ENCODE measurements at regions of chr4 and their contacts with region 1.

Region 1: DNA sequence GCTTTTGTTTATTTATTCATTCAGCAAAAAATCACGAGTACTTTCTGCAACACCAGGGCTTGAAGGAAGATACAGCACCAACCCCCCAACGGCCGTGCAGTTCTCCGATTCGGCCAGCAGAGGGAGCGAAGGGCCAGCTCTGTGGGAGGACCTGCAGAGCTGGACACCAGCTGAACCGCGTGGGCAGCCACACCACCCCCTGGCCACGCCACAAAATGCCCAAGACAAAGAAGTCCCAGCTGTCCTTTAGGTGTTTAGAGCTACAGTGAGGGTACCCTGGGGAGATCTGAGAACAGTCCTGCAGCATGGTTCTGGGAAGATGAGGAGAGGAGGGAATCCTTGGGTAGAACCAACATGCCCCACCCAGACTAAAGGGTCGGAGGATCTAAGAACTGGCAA is 83.1 kb downstream of the RELL1 start:
- DNase-seq: peak; percentile 76
- H3K4me3 Mint-ChIP-seq: no peak overlapping the region
- H3K27ac Mint-ChIP-seq: no peak overlapping the region
- H3K4me1 Mint-ChIP-seq: peaks cover 23% of the 10 kb centered on the region
- H3K27me3 Mint-ChIP-seq: no peaks in the 10 kb centered on the region
- CTCF ChIP-seq: peak; percentile 94

Region 2: GRCh38 chr4:37475117-37475516 is 128.0 kb before region 1 on chr4:
- CTCF ChIA-PET with region 1: interaction called, 10 read pairs
- POLR2A ChIA-PET with region 1: no interaction called
- intact Hi-C with region 1: no loop called
- DNase-seq: no peak
- H3K4me3 Mint-ChIP-seq: no peak overlapping the region
- H3K27ac Mint-ChIP-seq: no peak overlapping the region
- H3K4me1 Mint-ChIP-seq: no peaks in the 10 kb centered on the region
- H3K27me3 Mint-ChIP-seq: peaks cover 38% of the 10 kb centered on the region
- CTCF ChIP-seq: no peak

Region 3: DNA sequence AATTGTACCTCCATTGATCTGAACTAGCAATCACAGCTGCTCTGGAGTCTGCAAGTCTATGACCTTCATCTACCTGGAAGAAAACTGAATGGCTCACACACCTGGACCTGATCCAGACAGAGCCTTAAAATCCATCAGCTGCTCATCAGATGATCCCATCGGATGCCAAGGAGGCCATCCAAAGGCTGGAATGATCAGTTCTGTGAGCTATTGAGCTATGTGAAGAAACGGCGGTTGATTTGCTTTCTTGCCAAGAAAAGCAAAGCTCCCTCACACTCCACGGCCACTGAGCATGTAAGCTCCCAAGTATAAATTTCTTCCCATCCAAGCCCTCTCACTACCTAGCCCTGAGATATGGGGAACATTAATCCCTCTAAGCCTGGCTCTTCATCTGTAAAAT is 20.1 kb after region 1 on chr4:
- CTCF ChIA-PET with region 1: interaction called, 66 read pairs
- POLR2A ChIA-PET with region 1: no interaction called
- intact Hi-C with region 1: no loop called
- DNase-seq: no peak
- H3K4me3 Mint-ChIP-seq: no peak overlapping the region
- H3K27ac Mint-ChIP-seq: no peak overlapping the region
- H3K4me1 Mint-ChIP-seq: no peaks in the 10 kb centered on the region
- H3K27me3 Mint-ChIP-seq: no peaks in the 10 kb centered on the region
- CTCF ChIP-seq: no peak

Region 4: GRCh38 chr4:37653601-37654000 is 50.5 kb after region 1 on chr4:
- CTCF ChIA-PET with region 1: interaction called, 10 read pairs
- POLR2A ChIA-PET with region 1: interaction called, 3 read pairs
- intact Hi-C with region 1: loop called (anchors 1 kb)
- DNase-seq: peak; percentile 66
- H3K4me3 Mint-ChIP-seq: no peak overlapping the region
- H3K27ac Mint-ChIP-seq: no peak overlapping the region
- H3K4me1 Mint-ChIP-seq: peaks cover 11% of the 10 kb centered on the region
- H3K27me3 Mint-ChIP-seq: no peaks in the 10 kb centered on the region
- CTCF ChIP-seq: no peak

Region 5: GRCh38 chr4:37686373-37687193 is 83.5 kb after region 1 on chr4 and contains the start of gene RELL1:
- CTCF ChIA-PET with region 1: interaction called, 12 read pairs
- POLR2A ChIA-PET with region 1: interaction called, 3 read pairs
- intact Hi-C with region 1: loop called (anchors 1 kb)
- DNase-seq: peak; percentile 99
- H3K4me3 Mint-ChIP-seq: peak within 1 kb of the TSS; percentile 85
- H3K27ac Mint-ChIP-seq: peak within 1 kb of the TSS; percentile 92
- H3K4me1 Mint-ChIP-seq: peaks cover 29% of the 10 kb centered on the region
- H3K27me3 Mint-ChIP-seq: no peaks in the 10 kb centered on the region
- CTCF ChIP-seq: no peak
- total RNA-seq, gene RELL1: 28.6 and 34.0 TPM in 2 replicates

Region 6: GRCh38 chr4:37793562-37793961 is 190.5 kb after region 1 on chr4:
- CTCF ChIA-PET with region 1: interaction called, 110 read pairs
- POLR2A ChIA-PET with region 1: no interaction called
- intact Hi-C with region 1: loop called (anchors 1 kb)
- DNase-seq: peak; percentile 46
- H3K4me3 Mint-ChIP-seq: no peak overlapping the region
- H3K27ac Mint-ChIP-seq: no peak overlapping the region
- H3K4me1 Mint-ChIP-seq: no peaks in the 10 kb centered on the region
- H3K27me3 Mint-ChIP-seq: no peaks in the 10 kb centered on the region
- CTCF ChIP-seq: peak; percentile 71